Psoas muscle (tissue), 8 donors: ENCODE measurements at regions of chr11 and their contacts with region 1.

Region 1: GRCh38 chr11:113519989-113520613 is 44.9 kb upstream of the DRD2 start:
- DNase-seq: no peak
- ATAC-seq: no peak
- H3K4me3 ChIP-seq: no peak overlapping the region
- H3K27ac ChIP-seq: no peak overlapping the region
- H3K4me1 ChIP-seq: no peaks in the 10 kb centered on the region
- H3K27me3 ChIP-seq: no peaks in the 10 kb centered on the region
- CTCF ChIP-seq: no peak

Region 2: DNA sequence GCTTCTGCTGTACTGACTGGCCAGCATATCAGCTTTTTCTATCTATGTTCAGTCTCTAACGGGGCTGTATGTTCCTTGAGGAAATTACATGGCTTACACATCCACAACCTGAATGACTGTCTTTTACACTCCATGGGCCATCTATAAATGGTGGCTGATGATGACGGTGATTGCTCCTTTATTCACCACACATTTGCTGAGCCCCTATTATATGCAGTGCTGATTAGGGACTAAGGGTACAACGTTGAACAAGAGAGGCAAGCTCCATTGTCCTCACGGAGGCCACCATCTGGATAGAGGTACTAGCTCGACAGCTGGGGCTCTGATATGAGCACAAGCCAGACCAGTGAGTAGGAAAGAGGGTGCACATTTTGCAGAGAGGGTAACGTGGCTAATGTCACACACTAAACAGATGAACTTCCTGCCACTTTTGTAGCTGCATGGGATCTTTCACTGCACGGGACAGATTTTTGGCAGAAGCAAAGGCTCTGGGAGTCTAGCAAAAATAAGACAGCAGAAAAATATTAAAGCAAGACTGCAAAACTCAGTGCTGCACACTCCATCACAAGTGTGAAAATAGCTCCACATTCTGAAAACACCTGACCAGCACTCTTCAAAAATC is 75.5 kb before region 1 on chr11:
- intact Hi-C with region 1: loop called in 1 of 2 experiments (anchors 2 kb)
- DNase-seq: no peak
- ATAC-seq: no peak
- H3K4me3 ChIP-seq: no peak overlapping the region
- H3K27ac ChIP-seq: no peak overlapping the region
- H3K4me1 ChIP-seq: no peaks in the 10 kb centered on the region
- H3K27me3 ChIP-seq: no peaks in the 10 kb centered on the region
- CTCF ChIP-seq: no peak